ENCODE measurements at regions of chr6 and their contacts with region 1.

Region 1: DNA sequence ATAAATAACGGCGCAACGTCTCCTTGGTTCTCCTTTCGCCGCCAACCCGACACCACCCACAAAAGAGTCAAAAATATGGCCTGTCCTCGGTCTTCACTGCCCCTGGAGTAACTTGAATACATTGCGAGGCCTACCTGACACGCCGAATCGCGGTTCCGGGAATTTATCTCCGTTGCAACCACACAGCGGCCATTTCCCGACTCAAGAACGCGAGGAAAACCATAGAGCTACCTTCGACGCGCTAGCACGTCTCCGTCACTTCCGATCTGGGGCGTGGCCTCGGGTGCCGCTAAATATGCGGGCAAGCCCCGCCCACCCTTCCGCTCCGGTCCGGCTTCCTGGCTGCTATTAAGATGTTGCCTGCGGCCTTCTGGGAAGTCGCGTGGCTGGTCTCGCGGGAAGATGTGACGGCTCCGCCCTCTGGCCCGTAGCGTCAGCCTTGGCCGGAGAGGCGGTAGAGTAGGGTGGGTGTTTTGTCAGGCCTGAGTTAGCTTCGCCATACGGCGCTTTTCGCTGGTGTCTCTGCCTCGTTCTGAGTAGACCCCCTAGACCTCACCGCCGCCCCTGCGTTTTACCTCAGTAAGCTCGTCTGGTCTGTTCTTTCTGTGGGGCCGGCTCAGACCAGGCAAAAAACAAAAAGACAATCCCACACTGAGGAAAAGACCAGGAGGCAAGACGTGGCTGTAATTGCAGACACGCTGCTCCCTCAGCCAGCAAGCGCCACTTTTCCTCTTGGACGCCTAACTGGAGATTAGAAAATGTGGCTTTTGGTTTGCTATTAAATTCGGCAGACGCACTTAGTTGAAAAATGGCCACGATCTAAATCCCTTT is at the start of gene BCLAF1:
- DNase-seq: peak; percentile 98
- H3K4me3 Mint-ChIP-seq: peak within 1 kb of the TSS; percentile 96
- H3K27ac Mint-ChIP-seq: peak within 1 kb of the TSS; percentile 100
- H3K4me1 Mint-ChIP-seq: peaks cover 17% of the 10 kb centered on the region
- H3K27me3 Mint-ChIP-seq: no peaks in the 10 kb centered on the region
- CTCF ChIP-seq: no peak
- total RNA-seq, gene BCLAF1: 175 and 178 TPM in 2 replicates

Region 2: GRCh38 chr6:135686784-135687301 is 603.0 kb before region 1 on chr6:
- CTCF ChIA-PET with region 1: no interaction called
- POLR2A ChIA-PET with region 1: no interaction called
- intact Hi-C with region 1: no loop called
- DNase-seq: no peak
- H3K4me3 Mint-ChIP-seq: no peak overlapping the region
- H3K27ac Mint-ChIP-seq: no peak overlapping the region
- H3K4me1 Mint-ChIP-seq: no peaks in the 10 kb centered on the region
- H3K27me3 Mint-ChIP-seq: no peaks in the 10 kb centered on the region
- CTCF ChIP-seq: no peak

Region 3: GRCh38 chr6:136249811-136250685 is 39.7 kb before region 1 on chr6 and contains the start of gene MTFR2:
- CTCF ChIA-PET with region 1: interaction called, 3 read pairs
- POLR2A ChIA-PET with region 1: interaction called, 122 read pairs
- intact Hi-C with region 1: no loop called
- DNase-seq: peak; percentile 100
- H3K4me3 Mint-ChIP-seq: peak within 1 kb of the TSS; percentile 97
- H3K27ac Mint-ChIP-seq: peak within 1 kb of the TSS; percentile 82
- H3K4me1 Mint-ChIP-seq: peaks cover 12% of the 10 kb centered on the region
- H3K27me3 Mint-ChIP-seq: no peaks in the 10 kb centered on the region
- CTCF ChIP-seq: no peak
- total RNA-seq, gene MTFR2: 5.2 and 6.0 TPM in 2 replicates

Region 4: DNA sequence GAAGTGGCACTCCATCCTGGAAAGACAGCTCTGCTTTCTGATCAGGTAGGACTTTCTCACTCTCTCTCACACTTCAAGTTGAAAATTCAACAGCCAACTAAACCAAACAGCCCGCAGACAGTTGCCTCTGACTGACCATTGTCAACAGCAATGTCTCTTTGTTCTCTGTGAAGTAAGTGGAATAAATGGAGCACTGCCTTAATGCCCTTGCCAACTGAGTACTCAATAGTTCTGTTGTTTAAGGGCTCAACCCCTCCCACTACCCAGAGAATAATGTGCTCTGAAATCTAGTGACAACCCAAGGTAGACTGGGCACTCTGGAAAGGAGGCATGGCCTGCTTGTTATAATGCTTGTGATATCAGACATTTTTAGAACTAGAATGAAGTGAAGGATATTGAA is 16.7 kb after region 1 on chr6:
- CTCF ChIA-PET with region 1: interaction called, 6 read pairs
- POLR2A ChIA-PET with region 1: interaction called, 26 read pairs
- intact Hi-C with region 1: no loop called
- DNase-seq: no peak
- H3K4me3 Mint-ChIP-seq: no peak overlapping the region
- H3K27ac Mint-ChIP-seq: no peak overlapping the region
- H3K4me1 Mint-ChIP-seq: no peaks in the 10 kb centered on the region
- H3K27me3 Mint-ChIP-seq: no peaks in the 10 kb centered on the region
- CTCF ChIP-seq: no peak

Region 5: DNA sequence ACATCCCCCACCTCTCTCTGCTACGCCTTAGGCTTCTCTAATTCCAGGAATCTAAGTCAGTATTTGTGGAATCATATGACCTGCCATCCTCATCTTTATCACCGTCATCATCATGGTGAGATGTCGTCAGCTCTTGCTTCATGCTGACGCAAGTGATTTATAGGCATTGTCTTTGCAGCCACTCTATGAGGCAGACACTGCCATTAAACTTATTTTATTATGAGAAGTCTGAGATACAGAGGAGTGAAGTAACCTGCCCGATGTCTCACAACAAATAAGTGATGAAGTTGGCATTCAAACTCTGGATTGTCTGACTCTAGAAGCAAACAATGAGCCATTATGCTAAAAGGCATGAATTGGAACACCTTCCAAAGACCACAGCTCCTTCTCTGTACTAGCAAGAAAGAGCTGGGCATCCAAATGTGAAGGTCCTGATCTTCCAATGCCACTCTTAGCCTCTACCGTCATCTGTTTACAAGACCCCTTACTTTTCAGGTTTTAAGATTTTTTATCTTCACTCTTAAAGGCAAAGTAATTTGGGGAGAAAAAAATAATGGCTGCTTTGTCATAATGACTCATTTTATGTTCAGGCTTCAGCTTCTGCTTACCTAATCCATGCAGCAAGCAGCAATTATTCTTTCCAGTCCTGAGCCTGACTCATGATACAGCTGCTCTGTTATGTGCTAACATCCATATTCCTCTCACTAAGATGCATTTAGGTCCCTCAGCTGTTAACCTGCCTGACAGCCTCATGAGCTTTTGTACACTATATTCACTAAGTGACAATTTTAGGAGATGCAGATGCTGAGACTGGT is 113.6 kb after region 1 on chr6:
- CTCF ChIA-PET with region 1: no interaction called
- POLR2A ChIA-PET with region 1: interaction called, 16 read pairs
- intact Hi-C with region 1: no loop called
- DNase-seq: peak; percentile 89
- H3K4me3 Mint-ChIP-seq: no peak overlapping the region
- H3K27ac Mint-ChIP-seq: peak overlapping the region; percentile 77
- H3K4me1 Mint-ChIP-seq: peaks cover 29% of the 10 kb centered on the region
- H3K27me3 Mint-ChIP-seq: no peaks in the 10 kb centered on the region
- CTCF ChIP-seq: no peak

Measured in MCF 10A (cell line).